ENCODE measurements at regions of chr7 and their contacts with region 1.

Region 1: DNA sequence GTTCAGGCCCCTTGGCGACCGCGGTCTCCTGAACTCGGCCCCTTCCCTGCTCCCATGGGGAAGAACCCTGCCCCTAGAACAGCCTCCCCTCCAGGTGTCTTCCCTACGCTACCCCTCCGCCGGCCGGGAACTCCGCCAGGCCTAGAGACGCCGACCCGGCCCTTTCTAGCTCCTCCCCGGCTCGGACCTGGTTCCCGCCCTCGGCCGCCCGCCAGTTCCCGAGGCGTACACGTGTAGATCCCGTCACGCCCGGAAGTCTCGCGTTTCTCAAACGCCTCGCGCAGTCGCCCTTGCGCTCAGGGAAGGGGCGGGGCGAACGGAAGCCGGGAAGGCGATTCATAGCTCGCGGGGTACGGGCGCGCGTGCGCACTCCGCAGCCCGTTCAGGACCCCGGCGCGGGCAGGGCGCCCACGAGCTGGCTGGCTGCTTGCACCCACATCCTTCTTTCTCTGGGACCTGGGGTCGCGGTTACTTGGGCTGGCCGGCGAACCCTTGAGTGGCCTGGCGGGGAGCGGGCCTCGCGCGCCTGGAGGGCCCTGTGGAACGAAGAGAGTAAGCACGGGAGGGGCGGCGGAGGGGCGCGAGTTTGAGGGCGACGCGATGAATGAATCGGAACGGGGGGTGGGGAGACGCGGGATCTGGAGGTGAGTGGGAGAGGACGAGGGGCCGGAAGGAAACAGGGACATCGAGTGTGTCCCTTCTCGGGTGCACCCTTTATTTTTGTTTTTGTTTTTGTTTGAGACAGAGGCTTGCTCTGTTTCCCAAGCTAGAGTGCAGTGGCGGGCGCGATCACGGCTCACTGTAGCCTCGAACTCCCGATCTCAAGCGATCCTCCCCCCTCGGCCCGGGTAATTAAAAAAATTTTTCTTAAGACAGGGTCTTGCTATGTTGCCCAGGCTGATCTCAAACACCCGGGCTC is at the start of gene POP7:
- DNase-seq: peak; percentile 98

Region 2: DNA sequence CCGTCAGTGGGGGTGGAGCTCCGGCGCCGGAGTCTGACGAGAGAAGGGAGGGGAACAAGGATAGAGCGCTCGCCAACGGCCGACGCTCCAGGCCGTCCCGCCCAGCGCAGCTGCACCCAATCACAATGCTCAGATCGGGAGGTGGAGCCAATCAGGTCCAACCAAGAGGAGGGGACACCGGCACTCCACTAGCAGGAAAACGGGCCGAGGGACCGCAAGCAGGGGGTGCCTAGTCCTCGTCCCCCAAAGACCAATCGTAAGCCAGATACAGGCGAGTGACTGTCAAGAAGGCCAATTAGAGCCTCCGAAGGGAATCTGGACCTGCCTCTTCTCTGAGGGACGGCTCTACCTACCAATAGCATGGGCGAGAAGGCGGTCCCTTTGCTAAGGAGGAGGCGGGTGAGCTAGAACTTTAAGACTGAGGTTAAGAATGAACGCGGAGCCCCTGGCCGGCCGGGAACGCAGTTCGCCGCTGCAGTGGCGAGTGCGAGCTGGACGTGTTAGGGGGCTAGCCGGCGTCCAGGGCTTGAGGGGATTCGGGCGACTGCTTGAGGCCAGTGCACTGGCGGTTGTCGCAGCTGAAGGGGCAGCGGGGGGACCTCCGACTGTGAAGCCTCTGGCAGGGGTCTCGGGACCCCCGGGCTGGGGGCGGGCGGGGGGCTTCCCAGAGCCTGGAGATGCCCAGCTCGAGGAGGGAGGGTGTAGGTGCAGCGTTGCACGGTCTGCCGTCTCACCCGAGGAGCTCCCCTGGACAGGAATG is 119.6 kb before region 1 on chr7 and contains the start of gene FBXO24:
- CTCF ChIA-PET with region 1: interaction called, 4 read pairs
- POLR2A ChIA-PET with region 1: interaction called, 25 read pairs
- DNase-seq: peak; percentile 98

Region 3: GRCh38 chr7:100611974-100612729 is 93.9 kb before region 1 on chr7 and contains the start of gene MOSPD3:
- CTCF ChIA-PET with region 1: no interaction called
- POLR2A ChIA-PET with region 1: interaction called, 14 read pairs
- DNase-seq: peak; percentile 97

Region 4: DNA sequence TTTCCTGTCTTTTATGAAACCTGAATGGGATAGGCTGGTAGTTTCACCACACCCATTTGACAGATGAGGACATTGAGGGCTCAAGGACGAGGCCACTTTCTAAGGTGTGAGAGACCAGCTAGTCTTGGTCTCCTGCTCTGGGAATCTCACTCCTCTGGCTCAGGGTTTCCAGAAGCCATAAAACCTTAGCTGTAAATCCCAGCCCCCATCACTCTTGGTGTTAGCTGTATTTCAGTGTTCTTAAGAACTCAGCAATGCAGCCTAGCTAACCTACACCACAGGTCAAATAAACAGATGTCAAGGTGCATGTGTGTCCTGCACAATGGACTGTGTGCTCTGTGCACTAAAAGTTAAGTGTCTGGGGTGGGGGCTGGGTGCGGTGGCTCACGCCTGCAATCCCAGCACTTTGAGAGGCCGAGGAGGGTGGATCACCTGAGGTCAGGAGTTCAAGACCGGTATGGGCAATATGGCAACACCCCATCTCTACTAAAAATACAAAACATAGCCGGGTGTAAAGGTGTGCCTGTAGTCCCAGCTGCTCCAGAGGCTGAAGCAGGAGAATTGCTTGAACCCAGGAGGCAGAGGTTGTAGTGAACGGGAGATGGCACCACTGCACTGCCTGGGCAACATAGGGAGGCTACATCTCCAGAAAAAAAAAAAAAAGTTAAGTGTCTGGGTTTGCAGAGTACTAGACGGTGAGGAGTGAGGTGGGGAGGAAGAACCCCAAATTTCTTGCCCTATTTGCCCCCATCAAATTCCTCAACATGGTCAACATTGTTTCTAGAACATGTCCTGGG is 13.7 kb after region 1 on chr7:
- CTCF ChIA-PET with region 1: interaction called, 20 read pairs
- POLR2A ChIA-PET with region 1: interaction called, 68 read pairs
- DNase-seq: no peak

Region 5: GRCh38 chr7:100827330-100828227 is 121.6 kb after region 1 on chr7 and contains the start of gene EPHB4:
- CTCF ChIA-PET with region 1: interaction called, 4 read pairs
- POLR2A ChIA-PET with region 1: interaction called, 10 read pairs
- DNase-seq: peak; percentile 85

Region 6: DNA sequence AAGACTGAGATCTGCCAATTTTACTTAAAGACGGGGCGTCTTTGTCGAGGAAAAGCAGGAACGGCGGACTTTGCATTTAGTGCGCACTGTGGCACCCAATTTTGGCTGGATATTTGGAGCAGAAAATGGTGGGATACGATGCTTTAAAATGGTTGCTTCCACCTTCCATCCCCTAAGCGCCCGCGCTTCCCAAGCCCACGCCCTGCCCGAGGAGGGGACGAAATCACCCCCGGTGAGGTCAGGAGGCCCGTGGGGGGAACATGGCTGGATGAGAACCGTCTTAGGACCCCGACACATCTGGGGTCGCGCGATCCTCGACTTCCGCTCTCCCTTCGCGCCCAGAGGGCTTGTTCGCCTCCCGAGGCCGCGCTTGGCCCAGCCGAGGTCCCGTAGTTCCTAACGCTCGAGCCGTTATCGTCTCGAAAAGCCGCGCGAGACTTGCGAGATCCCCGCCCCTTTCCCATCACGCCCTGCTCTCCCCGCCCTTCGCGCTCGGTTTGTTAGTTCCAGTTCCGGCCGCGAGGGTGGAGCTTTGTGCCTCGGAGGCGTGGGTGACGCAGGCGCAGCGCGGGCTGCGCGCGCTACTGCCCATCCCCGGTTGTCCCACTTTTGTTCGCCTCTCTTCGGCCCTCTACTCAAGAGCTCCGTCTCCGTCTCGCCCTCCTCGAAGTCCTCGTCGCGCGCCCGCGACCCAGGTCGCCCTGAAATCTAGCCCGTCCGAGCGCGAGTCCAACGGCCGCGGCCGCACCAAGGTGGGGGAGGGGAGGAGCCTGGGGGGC is 168.8 kb after region 1 on chr7 and contains the start of gene SRRT:
- CTCF ChIA-PET with region 1: interaction called, 3 read pairs
- POLR2A ChIA-PET with region 1: interaction called, 12 read pairs
- DNase-seq: peak; percentile 97

Measured in HEK293T (cell line).